GM10248 (cell line): ENCODE measurements at regions of chr17 and their contacts with region 1.

Region 1: GRCh38 chr17:74368092-74369081 is 1.1 kb downstream of the GPR142 start:
- DNase-seq: peak; percentile 87
- CTCF ChIP-seq: peak; percentile 99

Region 2: DNA sequence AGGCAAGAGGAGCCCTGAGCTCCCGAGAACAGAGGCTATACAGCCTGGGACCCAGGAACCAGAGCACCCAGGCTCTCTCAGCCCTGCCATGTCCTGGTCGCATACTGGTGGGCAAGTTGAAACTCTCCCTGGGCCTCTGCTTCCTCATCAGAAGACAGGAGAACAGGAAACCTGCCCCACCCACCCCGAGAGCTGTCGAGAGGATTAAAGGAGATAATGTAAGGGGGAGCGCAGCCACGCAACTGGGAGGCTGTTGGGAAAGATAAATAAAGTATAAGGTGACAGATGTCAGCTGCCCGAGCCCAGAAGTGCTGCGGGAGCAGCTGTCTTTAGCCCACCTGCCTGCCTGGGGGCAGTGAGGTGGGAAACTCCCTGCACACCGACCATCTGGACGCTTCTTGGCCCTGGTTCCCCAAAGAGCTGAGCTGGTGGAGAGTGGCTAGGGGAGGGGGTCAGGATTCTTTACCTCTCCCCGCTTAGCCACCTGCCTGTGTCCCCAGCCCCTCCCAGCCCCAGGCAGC is 35.6 kb before region 1 on chr17:
- CTCF ChIA-PET with region 1: interaction called, 18 read pairs
- POLR2A ChIA-PET with region 1: no interaction called
- DNase-seq: no peak
- CTCF ChIP-seq: no peak

Region 3: DNA sequence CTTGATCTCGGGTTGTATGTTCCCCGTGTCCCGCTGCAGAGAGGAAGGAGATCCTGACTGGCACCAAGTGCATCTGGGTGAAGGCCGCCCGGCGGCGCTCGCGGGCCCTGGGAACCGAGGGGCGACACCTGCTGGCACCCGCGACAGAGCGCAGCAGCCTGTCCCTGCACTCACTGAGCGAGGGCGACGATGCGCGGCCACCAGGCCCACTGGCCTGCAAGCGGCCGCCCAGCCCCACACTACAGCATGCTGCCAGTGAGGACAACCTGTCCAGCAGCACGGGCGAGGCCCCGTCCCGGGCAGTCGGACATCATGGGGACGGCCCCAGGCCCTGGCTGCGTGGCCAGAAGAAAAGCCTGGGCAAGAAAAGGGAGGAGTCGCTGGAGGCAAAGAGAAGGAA is 14.3 kb before region 1 on chr17:
- CTCF ChIA-PET with region 1: interaction called, 24 read pairs
- POLR2A ChIA-PET with region 1: no interaction called
- DNase-seq: peak; percentile 84
- CTCF ChIP-seq: peak; percentile 79

Region 4: GRCh38 chr17:74394977-74395376 is 26.6 kb after region 1 on chr17:
- CTCF ChIA-PET with region 1: interaction called, 35 read pairs
- POLR2A ChIA-PET with region 1: no interaction called
- DNase-seq: no peak
- CTCF ChIP-seq: no peak

Region 5: GRCh38 chr17:74478420-74479100 is 110.2 kb after region 1 on chr17:
- CTCF ChIA-PET with region 1: interaction called, 11 read pairs
- POLR2A ChIA-PET with region 1: no interaction called
- DNase-seq: peak; percentile 45
- CTCF ChIP-seq: no peak

Region 6: DNA sequence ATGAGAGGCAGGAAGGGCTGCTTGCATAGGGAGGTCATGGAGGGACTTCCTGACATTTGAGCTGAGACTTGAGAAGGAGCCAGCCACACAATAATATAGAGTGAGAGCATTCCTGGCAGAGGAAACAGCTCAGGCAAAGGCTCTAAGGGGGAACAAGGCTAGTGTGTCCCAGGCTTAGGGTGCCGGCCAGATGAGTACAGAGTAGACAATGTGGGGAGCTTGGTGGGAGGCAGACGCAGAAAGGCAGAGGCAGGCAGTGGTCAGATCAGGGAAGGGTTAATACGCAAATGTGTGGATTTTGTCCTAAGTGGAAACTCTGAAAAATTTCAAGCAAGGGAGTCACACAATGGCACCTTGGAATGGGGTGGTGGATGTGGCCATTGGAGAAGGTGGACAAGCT is 131.6 kb after region 1 on chr17:
- CTCF ChIA-PET with region 1: interaction called, 16 read pairs
- POLR2A ChIA-PET with region 1: no interaction called
- DNase-seq: no peak
- CTCF ChIP-seq: no peak

Region 7: GRCh38 chr17:74601944-74602572 is 233.7 kb after region 1 on chr17:
- CTCF ChIA-PET with region 1: interaction called, 15 read pairs
- POLR2A ChIA-PET with region 1: no interaction called
- DNase-seq: peak; percentile 65
- CTCF ChIP-seq: peak; percentile 62